Right ventricle myocardium inferior (tissue), 1 donor: ENCODE measurements at regions of chr14 and their contacts with region 1.

Region 1: DNA sequence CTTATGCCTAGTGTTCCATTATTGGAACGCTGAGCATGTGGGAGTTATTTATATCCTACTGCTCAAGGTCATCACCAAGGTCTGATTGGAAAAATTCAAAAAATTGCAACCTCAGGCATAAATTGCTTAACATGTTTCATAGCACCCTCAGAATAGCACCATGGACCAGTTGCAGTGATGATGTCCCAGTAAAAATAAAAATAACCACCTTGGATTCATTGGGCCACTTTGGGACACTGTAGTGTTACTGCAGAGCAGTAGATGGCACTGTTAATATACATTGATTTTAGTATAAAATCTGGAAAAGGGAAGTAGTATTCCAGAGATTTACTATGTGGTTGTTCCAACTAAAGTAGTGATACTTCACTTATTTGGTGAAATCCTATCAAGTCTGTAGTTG is 31.0 kb upstream of the PTCSC3 start:
- DNase-seq: no peak
- ATAC-seq: no peak

Region 2: DNA sequence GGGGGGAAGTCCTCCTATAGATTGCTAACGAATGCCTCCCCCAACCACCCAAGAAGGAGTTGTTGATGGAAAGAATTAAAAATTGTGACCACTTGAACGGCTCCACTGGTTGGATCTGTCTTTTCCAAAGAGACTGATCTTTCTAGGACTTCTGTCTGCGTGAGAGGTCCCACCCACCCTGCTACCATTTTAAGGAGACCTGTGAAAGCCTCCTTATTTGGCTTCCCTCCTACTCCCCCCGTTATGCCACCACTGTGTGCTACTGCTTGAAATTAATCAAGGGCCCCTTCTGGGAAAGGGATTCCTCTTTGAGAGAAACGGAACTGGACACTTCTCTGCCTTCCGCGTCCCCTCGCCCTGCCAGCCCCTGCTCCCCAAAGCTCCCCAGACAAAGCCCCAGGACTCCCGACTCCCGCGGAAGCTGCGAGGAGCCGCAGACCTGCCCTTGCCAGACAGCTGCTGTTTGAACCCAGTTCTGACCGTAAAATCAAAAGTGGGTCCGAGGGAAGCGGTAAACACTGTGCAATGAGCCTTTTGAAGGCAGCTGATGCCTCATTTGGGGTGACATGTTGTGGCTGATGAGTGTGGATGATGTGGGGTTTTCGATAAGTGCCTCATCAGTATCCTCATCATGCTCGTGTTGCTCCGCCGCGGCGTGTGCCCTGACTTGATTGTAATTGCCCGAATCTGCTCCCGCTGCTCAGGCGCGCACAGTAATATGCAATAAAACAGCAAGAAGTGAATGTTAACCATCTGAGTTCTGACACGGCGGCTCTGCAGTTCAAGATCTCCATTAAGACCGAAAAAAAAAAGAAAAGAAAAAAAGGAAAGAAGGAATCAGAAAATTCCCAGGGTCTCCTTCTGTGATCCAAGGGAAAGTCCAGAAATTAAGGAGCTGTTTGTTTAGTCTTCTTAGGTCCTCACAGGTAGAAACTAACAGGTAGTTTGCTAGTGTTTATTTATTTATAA is 64.7 kb after region 1 on chr14:
- intact Hi-C with region 1: no loop called
- DNase-seq: no peak
- ATAC-seq: no peak

Region 3: GRCh38 chr14:36373982-36374673 is 166.6 kb after region 1 on chr14:
- intact Hi-C with region 1: loop called (anchors 10 kb)
- DNase-seq: no peak
- ATAC-seq: peak; percentile 46

Region 4: DNA sequence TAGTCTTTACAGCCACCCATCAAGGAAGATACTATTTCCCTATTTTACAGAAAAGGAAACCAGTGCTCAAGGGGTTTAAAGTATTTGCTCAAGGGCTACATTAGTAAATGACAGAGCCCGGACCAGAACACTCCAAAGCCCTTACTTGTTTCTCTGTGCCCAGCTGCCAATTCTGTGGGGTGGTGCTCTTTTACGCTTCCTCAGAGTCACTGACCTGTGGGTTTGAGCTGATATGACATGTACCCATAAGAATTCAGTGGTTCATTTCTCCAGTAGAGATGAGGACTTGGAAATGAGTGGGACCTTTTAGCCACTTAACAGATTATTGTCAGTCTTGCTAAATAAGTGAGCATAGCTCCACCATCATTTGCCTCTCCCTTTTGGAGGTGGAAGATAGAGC is 412.4 kb after region 1 on chr14:
- intact Hi-C with region 1: no loop called
- DNase-seq: no peak
- ATAC-seq: no peak